GM13977 (cell line): ENCODE measurements at regions of chr5 and their contacts with region 1.

Region 1: GRCh38 chr5:10283927-10284635 is 23.6 kb downstream of the CMBL start:
- DNase-seq: peak; percentile 85
- CTCF ChIP-seq: peak; percentile 96

Region 2: DNA sequence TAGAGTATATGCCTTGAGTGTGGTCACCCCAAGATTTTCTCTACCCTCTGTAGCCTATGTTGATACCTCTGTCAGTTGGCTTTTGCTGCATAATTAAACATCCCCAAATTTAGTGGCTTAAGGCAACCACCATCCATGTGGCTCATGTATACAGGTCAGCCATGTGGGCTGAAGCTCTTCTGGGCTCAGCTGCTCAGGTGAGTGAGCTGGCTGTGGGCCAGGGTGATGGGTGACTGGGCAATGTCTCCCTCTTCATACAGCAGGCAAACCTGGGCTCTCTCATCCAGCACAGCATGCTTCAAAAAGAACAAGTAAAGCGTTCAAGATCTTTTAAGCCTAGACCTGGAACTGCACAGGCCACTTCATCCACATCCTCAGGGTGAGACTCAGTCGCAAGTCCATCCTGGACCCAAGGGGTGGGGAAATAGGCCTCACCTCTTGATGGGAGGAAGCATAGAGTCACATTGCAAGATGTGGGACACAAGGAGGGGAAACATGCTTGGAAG is 465.7 kb before region 1 on chr5:
- in situ Hi-C with region 1: no loop called
- DNase-seq: no peak
- CTCF ChIP-seq: no peak

Region 3: DNA sequence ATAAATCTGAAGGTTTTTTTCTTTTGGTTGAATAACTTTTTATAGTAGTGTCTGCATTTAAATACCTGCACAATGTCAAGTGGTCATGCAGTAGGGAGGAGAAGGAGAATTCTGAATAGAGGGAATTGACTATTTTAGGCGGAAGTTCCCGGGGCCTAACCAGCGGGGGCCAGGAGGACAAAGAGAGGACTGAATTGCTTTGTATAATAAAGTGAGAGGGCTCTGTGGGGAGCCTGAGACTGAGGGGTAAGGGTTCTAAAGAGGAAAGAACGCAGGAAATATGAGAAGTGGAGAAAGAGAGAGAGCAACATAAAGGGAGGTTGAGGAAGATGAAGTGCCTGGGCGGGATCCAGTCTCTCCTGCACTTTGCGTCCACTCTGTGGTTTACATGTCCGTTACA is 181.0 kb before region 1 on chr5:
- in situ Hi-C with region 1: no loop called
- DNase-seq: no peak
- CTCF ChIP-seq: no peak

Region 4: DNA sequence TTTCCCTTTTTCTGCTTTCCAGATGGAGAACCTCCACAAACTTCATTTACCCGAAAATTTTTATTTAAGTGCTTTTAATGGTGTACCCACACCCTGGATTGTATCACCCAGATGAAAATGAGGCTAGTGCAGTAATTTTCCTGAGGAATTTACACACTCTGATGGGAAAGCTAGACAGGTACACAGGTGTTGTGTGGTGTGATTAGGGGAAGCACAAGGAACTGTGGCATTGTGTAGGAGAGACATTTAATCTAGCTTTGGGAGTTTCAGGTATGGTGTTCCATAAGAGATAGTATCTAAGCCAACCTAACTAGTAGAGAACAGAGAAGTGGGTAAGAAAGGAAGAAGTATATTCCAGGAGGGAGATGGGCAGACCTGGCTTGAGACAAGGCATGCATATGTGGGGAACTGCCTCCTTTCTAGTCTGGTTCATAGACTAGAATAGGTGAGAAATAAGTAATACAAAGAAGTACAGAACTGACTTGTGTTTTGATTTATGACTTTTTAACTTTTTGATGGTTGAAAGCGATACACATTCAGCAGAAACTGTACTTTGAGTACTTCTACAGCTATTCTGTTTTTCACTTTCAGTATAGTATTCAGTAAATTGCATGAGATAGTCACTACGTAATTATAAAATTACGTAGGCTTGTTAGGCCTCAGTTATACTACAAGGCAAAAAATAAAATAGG is 134.7 kb after region 1 on chr5:
- in situ Hi-C with region 1: loop called (anchors 10 kb)
- DNase-seq: no peak
- CTCF ChIP-seq: no peak